ENCODE measurements at regions of chr19 and their contacts with region 1.

Region 1: DNA sequence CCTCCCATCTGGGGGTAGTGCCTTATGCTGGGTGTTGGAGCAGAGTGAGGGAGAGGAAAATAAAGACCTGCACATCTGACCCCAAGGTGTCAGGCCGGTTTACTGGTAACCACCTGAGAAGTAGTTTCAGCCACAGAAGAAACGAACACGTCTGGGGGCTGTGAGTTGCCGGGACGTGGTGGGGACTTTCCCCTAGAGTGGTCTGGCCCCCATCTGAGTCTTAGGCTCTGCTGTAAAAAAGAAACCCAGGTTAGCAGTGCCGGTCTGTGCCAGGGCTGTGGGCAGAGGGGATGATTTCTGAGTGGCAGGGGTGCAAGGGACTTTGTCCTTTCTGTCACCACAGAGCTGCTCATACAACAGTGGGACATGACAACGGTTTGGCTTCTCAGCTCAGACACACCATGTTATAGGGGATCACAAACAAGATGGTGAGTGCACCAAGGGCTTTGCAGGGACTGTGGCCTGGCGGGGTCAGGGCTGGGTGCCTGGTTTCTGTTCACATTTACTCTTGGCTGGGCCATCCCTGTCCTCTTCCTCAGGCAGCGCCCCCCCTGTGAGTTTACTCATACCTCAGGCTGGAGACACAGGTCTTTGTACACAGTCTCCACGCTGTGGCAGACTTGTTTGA is 9.0 kb downstream of the GCDH start:
- DNase-seq: peak; percentile 82
- CTCF ChIP-seq: no peak

Region 2: GRCh38 chr19:12881172-12881808 is 18.7 kb before region 1 on chr19 and contains the start of gene DNASE2:
- CTCF ChIA-PET with region 1: interaction called, 38 read pairs
- POLR2A ChIA-PET with region 1: interaction called, 5 read pairs
- DNase-seq: peak; percentile 97
- CTCF ChIP-seq: no peak

Region 3: GRCh38 chr19:12913011-12913561 is 13.1 kb after region 1 on chr19:
- CTCF ChIA-PET with region 1: interaction called, 30 read pairs
- POLR2A ChIA-PET with region 1: interaction called, 3 read pairs
- DNase-seq: no peak
- CTCF ChIP-seq: no peak

Region 4: GRCh38 chr19:13082192-13083007 is 182.4 kb after region 1 on chr19:
- CTCF ChIA-PET with region 1: no interaction called
- POLR2A ChIA-PET with region 1: no interaction called
- DNase-seq: no peak
- CTCF ChIP-seq: peak; percentile 7

Measured in GM10248 (cell line).